ENCODE measurements at regions of chr4 and their contacts with region 1.

Region 1: DNA sequence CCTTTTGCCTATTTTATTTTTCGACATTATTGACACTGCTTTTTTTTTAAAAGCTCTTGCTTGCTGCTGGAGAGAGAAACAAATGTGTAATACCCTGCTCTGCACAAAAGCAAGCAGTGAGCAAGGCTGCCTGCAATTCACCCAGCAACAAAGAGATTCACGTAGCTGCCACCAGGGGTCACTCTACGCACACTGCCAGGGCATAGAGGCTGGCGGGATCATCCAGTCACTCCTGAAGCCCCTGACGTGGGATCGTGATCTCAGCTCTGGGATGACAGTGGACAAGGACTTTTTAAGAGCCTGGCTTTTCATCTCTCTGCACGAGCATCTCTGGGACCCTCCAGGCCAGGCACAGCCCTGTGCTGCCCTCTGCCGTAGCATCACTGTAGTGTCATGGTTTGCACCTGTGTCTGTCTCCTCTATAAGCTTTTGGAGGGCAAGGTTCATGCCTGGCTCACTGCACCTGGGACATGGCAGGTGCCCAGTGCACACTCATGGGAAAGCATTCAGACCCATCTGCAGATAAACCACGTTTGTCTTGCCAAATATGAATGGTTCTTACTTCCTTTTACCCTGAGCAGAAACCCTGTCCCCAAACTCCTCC is 19.8 kb downstream of the C4orf50 start:
- DNase-seq: peak; percentile 88
- H3K4me3 ChIP-seq: peak overlapping the region in 1 of 2 experiments; percentile 57; a peak in 1 of 4 replicates
- H3K27ac ChIP-seq: no peak overlapping the region; a peak in 1 of 4 replicates
- H3K4me1 ChIP-seq: peaks cover 0 to 23% of the 10 kb centered on the region in 2 experiments; a peak in 1 of 4 replicates
- H3K27me3 ChIP-seq: no peaks in the 10 kb centered on the region
- CTCF ChIP-seq: peak; percentile 62
- EP300 ChIP-seq: no peak
- RAD21 ChIP-seq: peak; percentile 96

Region 2: DNA sequence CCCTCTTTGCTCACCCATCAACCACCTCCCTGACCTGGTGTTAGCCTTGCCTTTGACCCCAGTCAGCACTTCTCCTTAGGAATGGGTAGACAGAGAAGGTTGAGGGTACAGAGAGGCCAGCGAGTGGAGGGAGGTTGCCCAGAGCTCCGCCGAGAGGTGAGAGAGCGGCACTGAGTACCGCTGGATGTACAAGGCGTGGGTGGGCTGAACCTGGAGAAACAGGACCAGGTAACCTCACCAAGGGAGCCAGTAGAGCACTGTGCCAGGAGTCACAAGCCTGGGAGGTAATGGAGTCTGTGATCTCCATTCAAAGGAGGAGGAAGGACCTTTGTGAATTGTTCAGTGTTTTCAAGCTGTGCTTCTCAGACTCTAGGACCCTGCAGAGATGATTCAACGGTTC is 546.3 kb before region 1 on chr4:
- CTCF ChIA-PET with region 1: no interaction called
- POLR2A ChIA-PET with region 1: no interaction called
- DNase-seq: no peak
- H3K4me3 ChIP-seq: no peak overlapping the region
- H3K27ac ChIP-seq: no peak overlapping the region
- H3K4me1 ChIP-seq: peaks cover 0 to 3% of the 10 kb centered on the region in 2 experiments; a peak in 1 of 4 replicates
- H3K27me3 ChIP-seq: no peaks in the 10 kb centered on the region; the same call in 1 of the 2 replicates
- CTCF ChIP-seq: no peak
- EP300 ChIP-seq: no peak
- RAD21 ChIP-seq: no peak

Region 3: GRCh38 chr4:5798462-5798861 is 200.0 kb before region 1 on chr4:
- CTCF ChIA-PET with region 1: no interaction called
- POLR2A ChIA-PET with region 1: no interaction called
- DNase-seq: no peak
- H3K4me3 ChIP-seq: no peak overlapping the region
- H3K27ac ChIP-seq: no peak overlapping the region
- H3K4me1 ChIP-seq: peaks cover 0 to 2% of the 10 kb centered on the region in 2 experiments; a peak in 1 of 4 replicates
- H3K27me3 ChIP-seq: no peaks in the 10 kb centered on the region
- CTCF ChIP-seq: no peak
- EP300 ChIP-seq: no peak
- RAD21 ChIP-seq: no peak

Region 4: DNA sequence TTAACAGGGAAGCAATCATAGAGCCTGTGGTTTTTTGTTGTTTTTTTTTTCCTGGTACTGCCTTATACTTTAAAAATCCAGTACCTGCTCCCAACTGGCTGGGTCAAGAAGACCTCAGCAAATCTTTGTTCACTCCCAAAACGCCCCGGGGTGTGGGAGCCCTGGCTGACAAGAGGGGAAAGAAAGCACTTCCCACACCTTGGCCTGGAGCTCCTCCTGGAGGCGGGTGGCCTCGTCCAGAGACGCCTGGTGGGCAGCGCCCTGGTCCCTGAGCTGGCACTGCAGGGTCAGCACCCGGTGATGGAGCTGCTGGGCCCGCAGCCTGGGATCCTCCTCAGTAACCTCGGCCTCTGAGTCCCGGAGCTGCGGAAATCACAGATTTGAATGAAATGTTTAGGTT is 18.5 kb before region 1 on chr4:
- CTCF ChIA-PET with region 1: interaction called, 50 read pairs
- POLR2A ChIA-PET with region 1: no interaction called
- DNase-seq: peak; percentile 80
- H3K4me3 ChIP-seq: no peak overlapping the region
- H3K27ac ChIP-seq: no peak overlapping the region
- H3K4me1 ChIP-seq: no peaks in the 10 kb centered on the region; a peak in 1 of 4 replicates
- H3K27me3 ChIP-seq: no peaks in the 10 kb centered on the region
- CTCF ChIP-seq: no peak
- EP300 ChIP-seq: no peak
- RAD21 ChIP-seq: peak; percentile 71

Region 5: GRCh38 chr4:6032249-6033244 is 34.1 kb after region 1 on chr4:
- CTCF ChIA-PET with region 1: interaction called, 10 read pairs
- POLR2A ChIA-PET with region 1: no interaction called
- DNase-seq: no peak
- H3K4me3 ChIP-seq: no peak overlapping the region
- H3K27ac ChIP-seq: peak overlapping the region in 1 of 2 experiments; percentile 47; a peak in 1 of 4 replicates
- H3K4me1 ChIP-seq: peaks cover 0 to 15% of the 10 kb centered on the region in 2 experiments; a peak in 1 of 4 replicates
- H3K27me3 ChIP-seq: no peaks in the 10 kb centered on the region
- CTCF ChIP-seq: no peak
- EP300 ChIP-seq: no peak
- RAD21 ChIP-seq: peak; percentile 54

Region 6: GRCh38 chr4:6093671-6094070 is 95.2 kb after region 1 on chr4:
- CTCF ChIA-PET with region 1: interaction called, 92 read pairs
- POLR2A ChIA-PET with region 1: no interaction called
- DNase-seq: no peak
- H3K4me3 ChIP-seq: no peak overlapping the region
- H3K27ac ChIP-seq: no peak overlapping the region
- H3K4me1 ChIP-seq: peaks cover 0 to 4% of the 10 kb centered on the region in 2 experiments; a peak in 1 of 4 replicates
- H3K27me3 ChIP-seq: no peaks in the 10 kb centered on the region
- CTCF ChIP-seq: no peak
- EP300 ChIP-seq: no peak
- RAD21 ChIP-seq: no peak

Region 7: GRCh38 chr4:6221851-6222760 is 223.7 kb after region 1 on chr4:
- CTCF ChIA-PET with region 1: interaction called, 18 read pairs
- POLR2A ChIA-PET with region 1: no interaction called
- DNase-seq: peak; percentile 97
- H3K4me3 ChIP-seq: peak overlapping the region in 1 of 2 experiments; percentile 45; a peak in 2 of 4 replicates
- H3K27ac ChIP-seq: peak overlapping the region in 1 of 2 experiments; percentile 72; a peak in 1 of 4 replicates
- H3K4me1 ChIP-seq: peaks cover 0 to 26% of the 10 kb centered on the region in 2 experiments; a peak in 2 of 4 replicates
- H3K27me3 ChIP-seq: no peaks in the 10 kb centered on the region
- CTCF ChIP-seq: no peak
- EP300 ChIP-seq: no peak
- RAD21 ChIP-seq: no peak

Region 8: DNA sequence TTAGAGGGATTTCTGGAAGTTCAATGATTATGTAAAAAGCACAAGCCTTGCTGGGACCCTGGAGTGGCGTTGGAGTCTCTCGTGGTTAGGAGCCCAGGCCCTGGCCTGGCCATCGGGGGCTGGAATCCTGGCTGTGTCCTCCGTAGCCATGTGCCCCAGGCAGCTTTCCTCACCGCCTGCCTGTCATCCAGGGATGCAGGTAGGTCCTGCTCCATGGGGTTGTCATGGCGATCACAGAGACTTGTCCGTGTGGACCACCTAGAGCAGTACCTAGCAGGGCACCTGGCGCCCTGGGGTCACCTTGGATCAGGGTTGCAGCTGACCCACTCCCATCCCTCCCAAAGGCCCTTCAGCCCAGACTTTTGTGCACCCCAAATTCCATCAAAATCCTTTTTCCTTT is 241.1 kb after region 1 on chr4:
- CTCF ChIA-PET with region 1: no interaction called
- POLR2A ChIA-PET with region 1: no interaction called
- DNase-seq: no peak
- H3K4me3 ChIP-seq: no peak overlapping the region
- H3K27ac ChIP-seq: no peak overlapping the region
- H3K4me1 ChIP-seq: no peaks in the 10 kb centered on the region; a peak in 1 of 4 replicates
- H3K27me3 ChIP-seq: no peaks in the 10 kb centered on the region
- CTCF ChIP-seq: no peak
- EP300 ChIP-seq: no peak
- RAD21 ChIP-seq: no peak

Region 9: GRCh38 chr4:6327041-6327917 is 328.8 kb after region 1 on chr4:
- CTCF ChIA-PET with region 1: interaction called, 46 read pairs
- POLR2A ChIA-PET with region 1: no interaction called
- DNase-seq: peak; percentile 94
- H3K4me3 ChIP-seq: peak overlapping the region in 1 of 2 experiments; percentile 55; a peak in 1 of 4 replicates
- H3K27ac ChIP-seq: no peak overlapping the region
- H3K4me1 ChIP-seq: peaks cover 0 to 3% of the 10 kb centered on the region in 2 experiments; a peak in 1 of 4 replicates
- H3K27me3 ChIP-seq: no peaks in the 10 kb centered on the region
- CTCF ChIP-seq: peak; percentile 81
- EP300 ChIP-seq: no peak
- RAD21 ChIP-seq: peak; percentile 99